ENCODE measurements at regions of chr17 and their contacts with region 1.

Region 1: DNA sequence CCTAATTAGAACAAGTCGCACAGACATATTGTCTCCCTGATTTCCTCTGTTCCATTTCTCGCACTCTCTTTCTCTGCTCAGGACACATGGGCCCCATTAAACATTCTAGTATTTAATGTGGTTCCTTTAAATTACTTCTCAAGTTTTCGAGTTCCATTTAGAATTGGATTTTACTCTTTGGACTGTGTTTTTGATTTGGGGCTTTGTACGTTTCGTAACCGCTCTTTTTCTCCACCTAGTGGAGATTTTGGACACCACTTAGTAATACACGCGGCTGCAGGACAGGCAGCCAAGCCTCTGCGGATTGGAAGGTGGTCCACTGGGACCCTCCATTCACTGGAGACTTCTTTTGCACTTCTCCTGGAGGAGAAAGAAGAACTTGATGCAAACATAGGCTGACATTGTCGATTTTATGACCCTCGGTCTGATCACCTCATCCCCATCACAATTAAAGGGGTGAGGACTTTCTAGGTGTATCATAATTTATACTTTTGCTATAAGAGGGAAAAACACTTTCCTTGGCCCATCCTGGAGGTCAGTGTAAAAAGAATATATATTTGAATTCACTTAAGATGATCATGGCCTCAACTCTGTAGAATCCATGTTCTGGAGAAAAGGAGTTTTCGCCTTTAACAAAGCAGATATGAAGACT is 85.7 kb downstream of the NOG start:
- DNase-seq: peak in 3 of 5 donors; percentile 8 to 15 (median 14)
- H3K4me3 ChIP-seq: no peak overlapping the region
- H3K4me3 Mint-ChIP-seq: peak overlapping the region; percentile 61 to 81 (median 75)
- H3K27ac ChIP-seq: no peak overlapping the region
- H3K27ac Mint-ChIP-seq: no peak overlapping the region
- H3K4me1 ChIP-seq: peaks cover 39% of the 10 kb centered on the region
- H3K4me1 Mint-ChIP-seq: peaks cover 17 to 21% (median 20%) of the 10 kb centered on the region in 4 donors
- H3K27me3 ChIP-seq: peaks cover 25% of the 10 kb centered on the region
- H3K27me3 Mint-ChIP-seq: peaks cover 46 to 48% of the 10 kb centered on the region in 2 donors

Region 2: GRCh38 chr17:56592487-56593085 is 86.7 kb before region 1 on chr17:
- CTCF ChIA-PET with region 1: no interaction called
- POLR2A ChIA-PET with region 1: no interaction called
- intact Hi-C with region 1: loop called (anchors 1 kb)
- DNase-seq: peak; percentile 50 to 61 (median 56)
- H3K4me3 ChIP-seq: peak overlapping the region; percentile 26 to 36
- H3K4me3 Mint-ChIP-seq: peak overlapping the region; percentile 73 to 89 (median 79)
- H3K27ac ChIP-seq: no peak overlapping the region
- H3K27ac Mint-ChIP-seq: peak overlapping the region in 1 of 7 donors; percentile 41
- H3K4me1 ChIP-seq: peaks cover 36% of the 10 kb centered on the region
- H3K4me1 Mint-ChIP-seq: peaks cover 11 to 41% (median 18%) of the 10 kb centered on the region in 4 donors
- H3K27me3 ChIP-seq: peaks cover 13% of the 10 kb centered on the region
- H3K27me3 Mint-ChIP-seq: peaks cover 28 to 46% of the 10 kb centered on the region in 2 donors

Measured in CD4-positive, alpha-beta memory T cell (primary cell).